ENCODE measurements at regions of chr7 and their contacts with region 1.

Region 1: GRCh38 chr7:95476904-95477594 is 8.7 kb upstream of the ASB4 start:
- DNase-seq: peak; percentile 79
- H3K4me3 Mint-ChIP-seq: no peak overlapping the region
- H3K27ac Mint-ChIP-seq: no peak overlapping the region
- H3K4me1 Mint-ChIP-seq: peaks cover 10% of the 10 kb centered on the region
- H3K27me3 Mint-ChIP-seq: no peaks in the 10 kb centered on the region
- CTCF ChIP-seq: peak; percentile 72

Region 2: GRCh38 chr7:94295850-94296249 is 1181.2 kb before region 1 on chr7:
- CTCF ChIA-PET with region 1: no interaction called
- POLR2A ChIA-PET with region 1: no interaction called
- intact Hi-C with region 1: loop called (anchors 5 kb)
- DNase-seq: peak; percentile 38
- H3K4me3 Mint-ChIP-seq: no peak overlapping the region
- H3K27ac Mint-ChIP-seq: no peak overlapping the region
- H3K4me1 Mint-ChIP-seq: peaks cover 28% of the 10 kb centered on the region
- H3K27me3 Mint-ChIP-seq: no peaks in the 10 kb centered on the region
- CTCF ChIP-seq: peak; percentile 37

Region 3: DNA sequence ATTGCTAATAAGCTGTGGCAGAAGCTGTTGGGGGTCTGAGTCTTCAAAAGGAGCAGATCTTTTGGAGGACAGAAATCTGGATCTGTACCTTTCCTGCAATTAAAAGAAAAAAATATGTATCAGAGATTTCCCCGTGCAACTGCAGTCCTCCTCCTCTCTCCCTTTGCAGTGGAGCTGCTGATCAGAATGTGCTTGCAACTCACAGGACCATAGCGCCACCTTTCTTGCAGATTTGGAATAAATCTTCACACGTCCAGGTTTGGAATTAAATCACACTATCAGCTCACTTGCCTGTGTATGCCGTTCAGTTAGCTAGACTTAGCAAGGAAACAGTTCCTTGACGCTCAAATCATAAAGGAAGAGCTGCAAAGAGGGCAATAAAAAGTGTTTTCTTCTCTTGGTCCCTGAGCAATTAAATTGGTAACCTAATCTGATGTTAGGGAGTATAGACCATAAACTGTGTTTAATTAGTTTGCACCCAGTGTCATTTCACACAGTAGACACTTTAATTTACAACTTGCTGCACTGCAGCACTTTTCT is 230.1 kb before region 1 on chr7:
- CTCF ChIA-PET with region 1: interaction called, 19 read pairs
- POLR2A ChIA-PET with region 1: interaction called, 3 read pairs
- intact Hi-C with region 1: loop called (anchors 5 kb)
- DNase-seq: peak; percentile 79
- H3K4me3 Mint-ChIP-seq: no peak overlapping the region
- H3K27ac Mint-ChIP-seq: no peak overlapping the region
- H3K4me1 Mint-ChIP-seq: no peaks in the 10 kb centered on the region
- H3K27me3 Mint-ChIP-seq: no peaks in the 10 kb centered on the region
- CTCF ChIP-seq: peak; percentile 65

Region 4: DNA sequence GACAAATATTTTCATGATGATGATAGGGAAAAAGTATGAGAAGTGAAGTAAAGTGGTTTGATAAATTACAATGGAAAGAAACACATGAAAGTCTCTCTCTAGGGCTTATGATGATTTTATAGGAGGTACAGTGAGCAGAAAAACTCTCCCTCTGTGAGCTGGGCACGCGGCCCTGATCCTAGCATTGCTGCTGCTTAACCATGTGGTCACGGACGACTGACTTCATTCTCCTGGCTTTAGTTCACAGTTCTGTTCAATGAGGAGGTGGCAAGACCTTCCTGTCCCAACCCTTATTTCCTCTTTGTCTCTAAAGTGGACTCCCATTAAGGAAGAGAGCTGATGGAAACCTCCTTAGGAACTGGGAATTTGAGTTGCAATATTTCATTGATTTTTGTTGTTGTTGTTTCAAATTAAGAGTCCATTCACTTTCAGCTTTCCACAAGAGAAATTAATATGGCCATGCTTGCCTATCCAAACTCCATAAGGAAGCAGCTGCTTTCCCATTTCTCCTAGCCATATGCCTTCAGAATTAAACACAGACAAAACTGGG is 72.7 kb before region 1 on chr7:
- CTCF ChIA-PET with region 1: interaction called, 22 read pairs
- POLR2A ChIA-PET with region 1: interaction called, 5 read pairs
- intact Hi-C with region 1: loop called (anchors 10 kb)
- DNase-seq: no peak
- H3K4me3 Mint-ChIP-seq: no peak overlapping the region
- H3K27ac Mint-ChIP-seq: no peak overlapping the region
- H3K4me1 Mint-ChIP-seq: no peaks in the 10 kb centered on the region
- H3K27me3 Mint-ChIP-seq: no peaks in the 10 kb centered on the region
- CTCF ChIP-seq: no peak

Region 5: GRCh38 chr7:95434557-95435421 is 42.3 kb before region 1 on chr7 and contains the start of gene PON2:
- CTCF ChIA-PET with region 1: interaction called, 27 read pairs
- POLR2A ChIA-PET with region 1: interaction called, 26 read pairs
- intact Hi-C with region 1: no loop called
- DNase-seq: peak; percentile 94
- H3K4me3 Mint-ChIP-seq: peak within 1 kb of the TSS; percentile 77
- H3K27ac Mint-ChIP-seq: peak within 1 kb of the TSS; percentile 96
- H3K4me1 Mint-ChIP-seq: peaks cover 48% of the 10 kb centered on the region
- H3K27me3 Mint-ChIP-seq: no peaks in the 10 kb centered on the region
- CTCF ChIP-seq: no peak
- total RNA-seq, gene PON2: 120 and 140 TPM in 2 replicates

Region 6: DNA sequence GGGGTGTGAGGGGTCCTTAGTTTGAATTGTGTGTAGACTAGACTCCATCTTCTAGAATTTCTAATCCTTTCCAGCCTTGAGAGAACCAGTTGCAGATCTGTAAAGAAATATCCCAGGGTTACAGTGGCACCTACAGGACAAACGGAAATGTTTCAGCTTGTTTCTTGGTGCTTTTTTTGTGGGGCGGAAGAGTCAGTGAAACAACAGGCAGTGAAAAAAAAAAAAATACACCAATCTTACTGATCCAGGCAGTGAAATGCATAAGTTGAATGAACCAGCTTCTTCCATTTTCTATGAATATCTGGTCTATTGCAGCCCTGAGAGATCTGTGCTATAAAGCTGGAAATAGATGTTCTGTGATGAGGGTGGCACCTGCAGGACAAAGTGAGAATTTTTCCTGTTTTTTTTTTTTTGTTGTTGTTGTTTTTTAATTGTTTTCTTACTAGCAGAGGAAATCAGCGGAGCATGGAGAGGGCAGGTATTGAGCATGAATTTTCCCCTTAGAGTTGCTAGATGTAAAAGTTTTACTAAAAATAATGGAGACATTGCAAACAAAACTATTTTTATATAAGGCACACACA is 213.4 kb after region 1 on chr7:
- CTCF ChIA-PET with region 1: interaction called, 20 read pairs
- POLR2A ChIA-PET with region 1: no interaction called
- intact Hi-C with region 1: no loop called
- DNase-seq: peak; percentile 68
- H3K4me3 Mint-ChIP-seq: peak overlapping the region; percentile 13
- H3K27ac Mint-ChIP-seq: peak overlapping the region; percentile 46
- H3K4me1 Mint-ChIP-seq: peaks cover 22% of the 10 kb centered on the region
- H3K27me3 Mint-ChIP-seq: peaks cover 11% of the 10 kb centered on the region
- CTCF ChIP-seq: peak; percentile 69